Keratinocyte (primary cell): ENCODE measurements at regions of chrX and their contacts with region 1.

Region 1: DNA sequence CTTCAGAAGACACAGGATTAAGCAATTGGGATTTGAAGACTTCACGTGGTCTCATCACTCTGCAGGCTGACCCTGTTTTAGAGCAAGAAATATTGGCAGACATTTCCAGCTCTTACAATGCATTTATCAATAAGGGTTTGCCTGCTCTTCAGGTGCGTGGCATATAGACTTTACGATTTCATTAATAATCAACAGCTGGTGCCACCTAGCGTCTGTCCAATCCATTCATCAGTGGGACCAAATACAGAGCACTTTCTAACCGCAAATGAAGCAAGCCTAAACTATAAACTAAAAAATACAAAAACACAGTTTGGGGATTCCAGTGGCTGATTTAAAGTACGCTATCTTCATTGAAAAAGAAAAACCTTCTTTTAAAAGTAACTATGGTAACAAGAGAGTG is 125.4 kb upstream of the DMD start:
- DNase-seq: no peak
- H3K4me3 ChIP-seq: no peak overlapping the region
- H3K27ac ChIP-seq: no peak overlapping the region
- H3K4me1 ChIP-seq: no peaks in the 10 kb centered on the region
- H3K27me3 ChIP-seq: no peaks in the 10 kb centered on the region
- CTCF ChIP-seq: peak; percentile 49 to 65 (median 59)

Region 2: DNA sequence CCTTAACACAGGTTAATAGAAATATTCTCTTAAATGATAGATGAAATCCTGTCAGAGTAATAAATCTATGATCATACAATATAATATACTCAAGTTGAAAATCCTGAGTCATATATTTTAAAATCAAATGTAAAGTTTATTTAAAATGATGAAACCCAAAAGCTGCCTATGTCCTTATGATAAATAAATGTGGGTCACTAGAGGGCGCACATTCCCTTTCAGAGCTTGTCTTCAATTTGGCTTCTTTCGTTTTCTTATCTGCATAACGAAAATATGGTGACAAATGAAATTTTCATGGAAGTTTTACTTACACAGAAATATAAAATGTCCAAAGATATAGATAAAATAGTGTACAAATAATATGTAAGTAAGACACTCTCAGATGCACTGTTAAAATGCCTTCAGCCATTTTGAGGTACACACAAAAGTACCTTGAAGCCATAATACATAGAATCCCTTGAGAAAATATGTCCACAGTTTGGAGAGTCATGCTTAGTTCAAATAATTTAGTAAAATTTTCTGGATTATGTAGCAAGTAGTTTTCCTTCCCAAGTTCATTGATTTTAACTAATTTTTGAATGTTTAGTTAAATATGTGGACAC is 805.9 kb before region 1 on chrX:
- dilution Hi-C with region 1: loop called (anchors 25 kb)
- DNase-seq: no peak
- H3K4me3 ChIP-seq: no peak overlapping the region
- H3K27ac ChIP-seq: no peak overlapping the region
- H3K4me1 ChIP-seq: no peaks in the 10 kb centered on the region
- H3K27me3 ChIP-seq: no peaks in the 10 kb centered on the region
- CTCF ChIP-seq: peak in 2 of 3 experiments; percentile 41 to 49

Region 3: GRCh38 chrX:33379839-33380238 is 43.1 kb after region 1 on chrX:
- dilution Hi-C with region 1: no loop called
- DNase-seq: no peak
- H3K4me3 ChIP-seq: no peak overlapping the region
- H3K27ac ChIP-seq: no peak overlapping the region
- H3K4me1 ChIP-seq: no peaks in the 10 kb centered on the region
- H3K27me3 ChIP-seq: no peaks in the 10 kb centered on the region
- CTCF ChIP-seq: no peak